Activated CD8-positive, alpha-beta T cell treated with anti-CD3 and anti-CD28 coated beads, Interleukin-2, amount 10 ng/mL, durations not matched to agents 7 days and 5 days (primary cell): ENCODE measurements at regions of chrX and their contacts with region 1.

Region 1: GRCh38 chrX:47523297-47523696 is 37.7 kb upstream of the ARAF start:
- DNase-seq: peak; percentile 81
- ATAC-seq: peak; percentile 99
- H3K4me3 Mint-ChIP-seq: peak overlapping the region; percentile 63
- H3K27ac Mint-ChIP-seq: peak overlapping the region; percentile 11
- H3K4me1 Mint-ChIP-seq: peaks cover 5% of the 10 kb centered on the region
- H3K27me3 Mint-ChIP-seq: no peaks in the 10 kb centered on the region

Region 2: DNA sequence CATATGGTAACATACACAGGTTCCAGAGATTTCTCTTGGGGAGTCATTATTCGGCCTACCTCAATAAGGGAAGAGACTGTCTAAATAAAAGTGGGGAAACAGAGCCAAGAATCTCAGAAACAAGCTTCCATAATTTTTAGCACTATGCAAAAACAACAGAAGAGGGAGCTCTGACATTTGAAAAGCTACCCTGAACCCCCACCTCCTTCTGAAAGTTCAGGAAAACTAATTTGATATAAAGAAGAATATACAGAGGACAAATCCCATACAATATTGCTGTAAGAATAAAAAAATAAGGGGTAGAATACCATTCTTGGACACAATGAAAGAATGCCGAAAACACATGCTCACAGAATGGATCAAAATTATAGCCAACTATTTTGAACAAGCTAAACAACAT is 26.0 kb before region 1 on chrX:
- CTCF ChIA-PET with region 1: interaction called, 16 read pairs
- POLR2A ChIA-PET with region 1: no interaction called
- DNase-seq: no peak
- ATAC-seq: no peak
- H3K4me3 Mint-ChIP-seq: no peak overlapping the region
- H3K27ac Mint-ChIP-seq: no peak overlapping the region
- H3K4me1 Mint-ChIP-seq: peaks cover 7% of the 10 kb centered on the region
- H3K27me3 Mint-ChIP-seq: no peaks in the 10 kb centered on the region

Region 3: GRCh38 chrX:47560831-47561652 is 37.7 kb after region 1 on chrX and contains the start of gene ARAF:
- CTCF ChIA-PET with region 1: no interaction called
- POLR2A ChIA-PET with region 1: no interaction called
- DNase-seq: peak; percentile 97
- ATAC-seq: peak; percentile 95
- H3K4me3 Mint-ChIP-seq: peak within 1 kb of the TSS; percentile 88
- H3K27ac Mint-ChIP-seq: peak within 1 kb of the TSS; percentile 96
- H3K4me1 Mint-ChIP-seq: peaks cover 43% of the 10 kb centered on the region
- H3K27me3 Mint-ChIP-seq: no peaks in the 10 kb centered on the region
- total RNA-seq, gene ARAF: 66.7 to 68.4 TPM